ENCODE measurements at regions of chr11 and their contacts with region 1.

Region 1: GRCh38 chr11:57249384-57250319 is 12.6 kb upstream of the APLNR start:
- DNase-seq: peak; percentile 52
- CTCF ChIP-seq: peak; percentile 79

Region 2: DNA sequence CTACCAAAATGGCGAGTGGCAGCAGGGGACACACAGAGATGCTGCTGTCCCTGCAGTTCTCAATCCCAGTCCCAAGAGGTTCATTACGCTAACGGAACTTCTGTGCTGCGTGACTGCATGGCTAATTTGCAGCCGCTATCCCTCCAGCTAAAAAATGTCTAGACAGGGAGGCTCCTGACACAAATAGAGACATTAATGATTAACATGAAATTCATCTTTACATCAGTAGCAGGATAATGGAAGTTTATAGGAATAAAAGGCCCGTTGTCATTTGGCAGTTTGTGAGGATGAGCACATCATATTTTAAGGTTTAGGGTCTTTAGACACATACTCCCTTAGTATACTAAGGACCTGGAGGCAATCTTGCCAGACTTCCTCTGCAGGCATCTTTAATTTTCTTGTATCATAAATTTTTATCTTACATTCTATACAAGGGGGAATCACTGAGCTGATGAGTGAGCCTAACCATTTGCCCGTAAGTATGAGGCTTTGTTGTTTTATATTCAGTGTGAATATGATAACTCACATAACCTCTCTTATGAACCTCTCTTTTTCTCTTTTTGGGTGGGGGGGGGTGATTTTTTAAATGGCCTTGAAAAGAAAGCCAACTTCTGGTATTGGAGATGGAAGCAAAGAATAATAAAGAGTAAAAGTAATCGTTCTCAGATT is 401.4 kb before region 1 on chr11:
- CTCF ChIA-PET with region 1: interaction called, 177 read pairs
- POLR2A ChIA-PET with region 1: no interaction called
- DNase-seq: no peak
- CTCF ChIP-seq: no peak

Region 3: DNA sequence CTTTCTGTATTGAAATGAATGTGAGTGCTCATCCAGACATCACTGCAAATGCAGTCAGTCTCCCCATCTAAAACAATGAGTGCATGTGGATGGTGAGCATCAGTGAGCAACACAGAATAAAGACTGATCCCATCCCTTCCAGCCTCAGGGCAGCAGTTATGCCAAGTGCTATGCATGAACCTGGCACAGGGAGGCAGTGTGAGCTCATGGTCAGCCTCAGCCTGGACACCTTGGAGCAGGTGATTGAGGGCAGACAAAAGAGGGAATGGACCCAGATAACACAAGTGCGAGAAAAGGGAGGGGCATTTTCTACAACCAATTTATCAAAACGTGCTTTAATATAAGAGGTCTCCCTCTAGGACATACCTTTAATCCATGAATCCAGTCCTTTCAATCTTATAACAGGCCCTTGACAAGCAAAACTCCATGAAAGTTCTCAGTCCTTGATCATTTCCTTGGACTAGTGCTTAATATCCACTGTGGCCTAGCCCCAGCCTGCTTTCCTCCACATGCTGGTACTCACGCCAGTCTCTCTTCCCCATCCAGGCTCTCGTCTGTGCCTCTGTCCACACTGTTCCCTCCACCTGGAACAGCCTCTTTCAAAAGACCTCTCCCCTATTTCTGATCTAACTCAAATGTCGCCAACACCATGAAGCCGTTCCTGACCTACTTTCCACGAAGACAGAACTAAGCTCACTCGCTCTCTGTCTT is 118.4 kb before region 1 on chr11:
- CTCF ChIA-PET with region 1: interaction called, 11 read pairs
- POLR2A ChIA-PET with region 1: no interaction called
- DNase-seq: no peak
- CTCF ChIP-seq: peak; percentile 7

Region 4: GRCh38 chr11:57231539-57232253 is 18.0 kb before region 1 on chr11:
- CTCF ChIA-PET with region 1: interaction called, 10 read pairs
- POLR2A ChIA-PET with region 1: no interaction called
- DNase-seq: no peak
- CTCF ChIP-seq: no peak

Region 5: DNA sequence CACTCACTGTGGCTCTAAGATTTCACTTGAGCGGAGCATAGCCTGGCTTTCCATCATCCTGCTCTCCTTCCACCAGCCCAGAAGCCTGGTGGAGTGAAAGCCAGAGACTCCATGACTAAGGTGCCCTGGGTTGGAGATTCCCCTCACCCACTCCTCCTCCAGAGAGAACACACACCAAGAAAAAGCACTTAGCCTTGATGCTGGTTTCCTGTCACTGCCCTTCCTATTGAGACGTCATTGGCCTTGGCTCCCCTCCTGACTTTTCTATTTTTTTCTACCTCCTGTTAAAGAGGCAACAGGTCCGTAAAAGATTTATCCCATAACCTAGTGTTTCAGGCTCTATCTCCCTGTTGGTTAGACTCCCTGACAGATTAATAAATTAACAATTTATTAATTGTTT is 25.9 kb after region 1 on chr11:
- CTCF ChIA-PET with region 1: interaction called, 18 read pairs
- POLR2A ChIA-PET with region 1: no interaction called
- DNase-seq: no peak
- CTCF ChIP-seq: no peak

Region 6: DNA sequence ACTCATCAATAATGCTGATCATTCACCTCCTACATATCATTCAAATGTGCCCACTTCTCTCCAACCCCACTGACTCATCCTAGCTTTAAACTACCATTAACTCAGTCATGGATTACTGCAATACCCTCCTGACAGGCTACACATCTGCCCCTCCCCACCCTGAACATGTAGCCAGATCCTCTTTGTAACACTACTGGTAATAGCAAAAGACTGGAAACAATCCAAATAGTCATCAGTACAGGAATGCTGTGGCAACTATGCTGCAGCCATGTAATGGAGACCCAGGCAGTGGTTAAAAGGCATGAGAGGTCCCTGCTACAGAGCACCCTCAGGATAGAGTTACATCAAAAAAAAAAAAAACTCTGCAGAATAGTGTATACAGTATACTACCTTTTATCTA is 160.6 kb after region 1 on chr11:
- CTCF ChIA-PET with region 1: no interaction called
- POLR2A ChIA-PET with region 1: no interaction called
- DNase-seq: no peak
- CTCF ChIP-seq: no peak

Region 7: DNA sequence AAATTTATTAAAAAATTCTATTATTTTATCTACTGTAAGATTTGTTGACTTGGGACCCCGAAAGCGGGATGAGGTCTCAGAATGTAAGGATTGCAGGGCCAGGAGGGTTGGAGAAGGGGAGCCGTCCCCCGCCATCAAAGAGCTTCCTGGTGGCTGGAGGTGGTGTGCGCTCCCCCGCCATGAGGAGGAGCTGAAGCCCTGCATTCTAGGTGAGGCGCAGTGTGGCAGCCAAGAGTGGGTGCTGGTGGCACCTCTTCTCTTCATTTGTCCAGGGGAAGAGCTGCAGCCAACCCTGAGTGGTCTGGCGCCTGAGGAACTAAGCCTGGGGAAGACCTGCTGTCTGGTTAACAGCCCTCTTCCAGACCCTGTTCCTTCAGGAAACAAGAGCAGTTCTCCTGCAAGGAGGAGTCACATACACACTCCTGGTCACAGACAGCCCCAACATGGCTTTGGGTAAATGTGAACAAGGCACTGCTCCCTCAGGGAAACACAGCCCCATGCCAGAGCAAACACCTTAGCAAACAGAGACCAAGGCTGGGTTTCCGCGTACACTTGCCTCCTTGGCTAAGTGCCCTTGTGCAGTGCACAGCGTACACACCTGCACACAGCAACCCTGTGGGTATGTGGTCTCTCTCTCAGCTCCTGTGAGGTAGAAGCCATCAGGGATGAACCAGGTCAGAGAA is 228.0 kb after region 1 on chr11:
- CTCF ChIA-PET with region 1: no interaction called
- POLR2A ChIA-PET with region 1: no interaction called
- DNase-seq: no peak
- CTCF ChIP-seq: no peak

Measured in GM10248 (cell line).